PC-9 (cell line): ENCODE measurements at regions of chr11 and their contacts with region 1.

Region 1: DNA sequence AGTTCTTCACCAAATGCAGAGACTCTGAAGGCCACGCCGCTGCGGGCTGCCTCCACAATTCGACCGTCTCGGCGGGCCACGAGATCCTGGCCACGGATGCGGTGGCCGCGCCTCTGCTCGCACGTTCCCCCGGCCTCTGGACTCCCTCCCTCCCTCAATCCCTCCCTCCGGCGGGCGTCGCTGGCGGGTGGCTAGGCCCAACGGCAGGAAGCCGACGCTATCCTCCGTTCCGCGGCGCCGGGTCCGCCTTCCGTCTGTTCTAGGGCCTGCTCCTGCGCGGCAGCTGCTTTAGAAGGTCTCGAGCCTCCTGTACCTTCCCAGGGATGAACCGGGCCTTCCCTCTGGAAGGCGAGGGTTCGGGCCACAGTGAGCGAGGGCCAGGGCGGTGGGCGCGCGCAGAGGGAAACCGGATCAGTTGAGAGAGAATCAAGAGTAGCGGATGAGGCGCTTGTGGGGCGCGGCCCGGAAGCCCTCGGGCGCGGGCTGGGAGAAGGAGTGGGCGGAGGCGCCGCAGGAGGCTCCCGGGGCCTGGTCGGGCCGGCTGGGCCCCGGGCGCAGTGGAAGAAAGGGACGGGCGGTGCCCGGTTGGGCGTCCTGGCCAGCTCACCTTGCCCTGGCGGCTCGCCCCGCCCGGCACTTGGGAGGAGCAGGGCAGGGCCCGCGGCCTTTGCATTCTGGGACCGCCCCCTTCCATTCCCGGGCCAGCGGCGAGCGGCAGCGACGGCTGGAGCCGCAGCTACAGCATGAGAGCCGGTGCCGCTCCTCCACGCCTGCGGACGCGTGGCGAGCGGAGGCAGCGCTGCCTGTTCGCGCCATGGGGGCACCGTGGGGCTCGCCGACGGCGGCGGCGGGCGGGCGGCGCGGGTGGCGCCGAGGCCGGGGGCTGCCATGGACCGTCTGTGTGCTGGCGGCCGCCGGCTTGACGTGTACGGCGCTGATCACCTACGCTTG is at the start of gene FUT4:
- DNase-seq: peak; percentile 90 to 95
- H3K4me3 ChIP-seq: peak within 1 kb of the TSS; percentile 87
- H3K27ac ChIP-seq: peak within 1 kb of the TSS; percentile 85
- H3K4me1 ChIP-seq: peaks cover 50% of the 10 kb centered on the region
- H3K27me3 ChIP-seq: no peaks in the 10 kb centered on the region
- CTCF ChIP-seq: no peak
- total RNA-seq, gene FUT4: 1.9 and 2.0 TPM in 2 replicates

Region 2: GRCh38 chr11:94588371-94588952 is 44.5 kb after region 1 on chr11:
- CTCF ChIA-PET with region 1: no interaction called
- POLR2A ChIA-PET with region 1: no interaction called
- intact Hi-C with region 1: loop called (anchors 1 kb)
- DNase-seq: peak; percentile 81 to 99
- H3K4me3 ChIP-seq: no peak overlapping the region
- H3K27ac ChIP-seq: peak overlapping the region; percentile 60
- H3K4me1 ChIP-seq: peaks cover 53% of the 10 kb centered on the region
- H3K27me3 ChIP-seq: no peaks in the 10 kb centered on the region
- CTCF ChIP-seq: no peak

Region 3: DNA sequence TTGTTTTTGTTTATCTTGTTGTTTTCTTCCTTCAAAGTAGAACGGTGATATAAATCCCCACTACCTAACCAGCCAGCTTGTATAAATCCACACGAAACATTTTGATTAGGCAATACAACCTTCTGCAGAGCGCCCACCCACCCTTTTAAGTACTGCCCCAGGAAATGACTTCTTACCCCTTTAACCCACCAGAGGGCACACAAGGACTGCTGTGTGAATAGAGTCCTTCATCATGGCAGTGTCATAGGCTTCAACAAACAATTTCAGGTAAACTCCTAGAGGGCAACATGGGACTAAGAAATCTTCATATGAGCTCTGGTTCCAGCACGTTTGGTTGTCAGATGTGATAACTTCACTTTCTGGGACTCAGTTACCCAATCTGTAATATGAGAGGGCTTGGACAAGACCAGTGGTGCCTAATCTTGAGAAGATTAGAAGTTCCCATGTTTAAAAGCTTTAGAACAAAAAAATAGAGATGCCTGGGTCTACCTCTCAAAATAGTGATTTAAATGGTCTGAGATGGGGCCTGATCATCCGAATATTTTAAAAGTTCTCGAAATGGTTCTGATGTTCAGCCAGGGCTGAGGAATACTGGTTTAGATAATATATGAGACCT is 79.3 kb after region 1 on chr11:
- CTCF ChIA-PET with region 1: no interaction called
- POLR2A ChIA-PET with region 1: no interaction called
- intact Hi-C with region 1: no loop called
- DNase-seq: peak; percentile 67 to 87
- H3K4me3 ChIP-seq: no peak overlapping the region
- H3K27ac ChIP-seq: 0 out of 2 replicates have a peak overlapping the region, but pooled peaks have one; percentile 12
- H3K4me1 ChIP-seq: peaks cover 5% of the 10 kb centered on the region; the same call in 1 of the 2 replicates
- H3K27me3 ChIP-seq: no peaks in the 10 kb centered on the region
- CTCF ChIP-seq: peak; percentile 99

Region 4: GRCh38 chr11:94731880-94732601 is 188.1 kb after region 1 on chr11:
- CTCF ChIA-PET with region 1: no interaction called
- POLR2A ChIA-PET with region 1: no interaction called
- intact Hi-C with region 1: loop called (anchors 5 kb)
- DNase-seq: peak in 1 of 2 experiments; percentile 83
- H3K4me3 ChIP-seq: no peak overlapping the region
- H3K27ac ChIP-seq: peak overlapping the region; percentile 86
- H3K4me1 ChIP-seq: peaks cover 99% of the 10 kb centered on the region
- H3K27me3 ChIP-seq: no peaks in the 10 kb centered on the region
- CTCF ChIP-seq: no peak

Region 5: DNA sequence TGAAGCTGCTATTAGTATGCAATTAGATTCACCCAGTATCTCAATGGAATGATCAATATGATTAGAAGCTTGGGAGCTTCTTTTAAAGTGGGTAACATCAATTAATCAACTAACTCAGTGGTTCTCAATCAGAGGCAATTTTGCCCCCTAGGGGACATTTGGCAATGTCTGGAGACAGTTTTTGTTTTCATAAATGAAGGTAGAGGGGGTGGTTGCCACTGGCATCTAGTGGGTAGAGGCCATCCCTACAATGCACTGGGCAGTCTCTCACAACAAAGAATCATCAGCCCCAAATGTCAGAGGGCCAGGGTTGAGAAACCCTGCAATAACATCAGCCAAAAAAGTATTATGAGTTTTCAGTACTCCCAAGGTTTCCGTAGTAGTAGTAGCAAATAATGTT is 218.2 kb after region 1 on chr11:
- CTCF ChIA-PET with region 1: no interaction called
- POLR2A ChIA-PET with region 1: no interaction called
- intact Hi-C with region 1: no loop called
- DNase-seq: peak; percentile 28 to 67
- H3K4me3 ChIP-seq: no peak overlapping the region
- H3K27ac ChIP-seq: no peak overlapping the region
- H3K4me1 ChIP-seq: peaks cover 32% of the 10 kb centered on the region
- H3K27me3 ChIP-seq: no peaks in the 10 kb centered on the region
- CTCF ChIP-seq: peak; percentile 73